ENCODE measurements at regions of chr13 and their contacts with region 1.

Region 1: GRCh38 chr13:99436686-99437416 is 64.4 kb upstream of the TM9SF2 start:
- DNase-seq: peak; percentile 95
- H3K4me3 Mint-ChIP-seq: peak overlapping the region; percentile 25
- H3K27ac Mint-ChIP-seq: peak overlapping the region; percentile 4
- H3K4me1 Mint-ChIP-seq: peaks cover 72% of the 10 kb centered on the region
- H3K27me3 Mint-ChIP-seq: peaks cover 23% of the 10 kb centered on the region

Region 2: DNA sequence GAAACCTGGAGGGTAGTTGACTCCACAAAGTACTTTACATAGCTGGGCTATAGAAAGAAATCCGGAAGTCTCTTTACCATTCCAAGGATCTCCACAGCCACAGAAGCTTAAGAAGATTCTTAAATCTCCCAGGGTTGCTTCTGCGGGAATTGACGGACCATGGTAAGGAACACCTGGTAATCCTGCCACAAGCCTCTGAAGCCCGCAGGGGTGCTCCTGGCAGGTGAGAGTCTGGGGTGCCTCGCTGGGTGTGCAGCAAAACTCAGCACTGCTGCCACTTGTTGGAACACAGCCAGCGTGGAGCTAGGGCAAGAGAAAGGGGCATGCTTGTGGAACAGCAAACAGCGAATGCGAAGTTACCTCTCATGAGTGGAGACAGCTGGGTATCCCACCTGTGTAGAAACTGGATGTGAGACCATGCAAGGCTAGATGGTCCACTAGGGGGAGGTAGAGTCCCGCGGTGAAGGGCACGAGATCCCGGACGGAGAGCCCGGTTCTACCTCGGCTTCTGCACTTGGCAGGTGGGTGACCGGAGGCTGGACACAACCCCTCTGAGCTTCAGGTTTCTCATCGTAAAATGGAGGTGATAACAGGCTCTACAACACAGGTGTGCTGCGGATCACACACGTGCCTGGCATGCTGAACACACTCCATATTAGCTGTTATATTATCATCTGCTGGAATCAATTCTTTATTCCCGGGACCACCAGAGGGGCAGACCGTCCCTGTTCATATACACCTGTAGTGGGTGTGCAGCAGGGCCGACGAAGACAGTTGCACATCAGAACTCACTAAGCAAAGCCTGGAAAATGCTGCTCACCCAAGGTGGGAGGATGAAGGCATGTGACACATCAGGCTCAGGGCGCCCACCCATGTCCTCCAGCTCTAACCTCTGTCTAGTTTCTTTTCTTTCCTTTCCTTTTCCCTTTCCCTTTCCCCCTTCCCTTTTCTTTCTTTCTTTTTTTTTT is 260.3 kb before region 1 on chr13:
- CTCF ChIA-PET with region 1: interaction called, 23 read pairs
- DNase-seq: peak; percentile 85
- H3K4me3 Mint-ChIP-seq: no peak overlapping the region
- H3K27ac Mint-ChIP-seq: peak overlapping the region; percentile 77
- H3K4me1 Mint-ChIP-seq: peaks cover 42% of the 10 kb centered on the region
- H3K27me3 Mint-ChIP-seq: peaks cover 28% of the 10 kb centered on the region

Region 3: GRCh38 chr13:99296398-99296797 is 140.5 kb before region 1 on chr13:
- CTCF ChIA-PET with region 1: interaction called, 15 read pairs
- DNase-seq: no peak
- H3K4me3 Mint-ChIP-seq: peak overlapping the region; percentile 58
- H3K27ac Mint-ChIP-seq: peak overlapping the region; percentile 90
- H3K4me1 Mint-ChIP-seq: peaks cover 75% of the 10 kb centered on the region
- H3K27me3 Mint-ChIP-seq: no peaks in the 10 kb centered on the region

Region 4: DNA sequence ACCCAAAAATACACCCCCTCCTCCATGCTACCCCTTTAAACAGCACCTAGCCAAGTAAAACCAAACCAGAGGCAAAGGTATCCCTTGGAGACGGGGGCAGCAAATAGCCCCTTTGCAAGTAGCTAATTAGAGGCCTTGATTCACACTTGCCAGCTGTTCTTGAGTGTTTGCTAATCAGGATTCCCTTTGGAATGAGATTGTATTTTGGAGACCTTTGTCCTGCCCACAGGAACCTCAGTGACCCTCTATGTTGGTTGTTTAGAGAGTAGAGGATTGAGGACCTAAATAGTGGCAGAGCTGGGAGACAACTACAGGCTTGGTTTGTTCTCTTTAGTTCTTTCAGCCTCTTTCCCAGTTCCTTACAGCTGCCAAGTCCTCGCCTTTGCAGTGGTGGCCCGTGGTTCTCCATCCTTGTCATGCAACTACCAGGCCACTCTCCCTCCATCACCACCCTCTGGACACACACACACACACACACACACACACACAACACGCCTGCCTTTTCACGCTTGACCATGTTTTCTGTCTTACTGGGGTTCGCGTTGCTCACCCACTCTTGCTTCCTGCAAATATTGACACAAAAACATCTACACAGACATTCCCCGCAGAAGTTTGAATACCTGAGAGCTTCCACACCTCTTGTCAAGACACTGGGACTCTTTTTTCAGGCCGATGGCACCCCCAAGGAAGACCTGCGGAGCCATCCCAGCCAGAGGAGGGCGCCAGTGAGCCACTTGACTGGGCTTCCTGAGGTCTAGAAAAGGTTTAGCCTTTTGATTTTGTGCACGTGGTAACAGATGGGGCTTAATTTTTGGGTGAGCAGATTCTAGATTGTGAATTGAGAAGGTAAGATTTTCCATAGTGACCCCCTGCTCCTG is 49.7 kb before region 1 on chr13:
- CTCF ChIA-PET with region 1: interaction called, 328 read pairs
- DNase-seq: peak; percentile 90
- H3K4me3 Mint-ChIP-seq: no peak overlapping the region
- H3K27ac Mint-ChIP-seq: peak overlapping the region; percentile 21
- H3K4me1 Mint-ChIP-seq: peaks cover 66% of the 10 kb centered on the region
- H3K27me3 Mint-ChIP-seq: no peaks in the 10 kb centered on the region

Region 5: DNA sequence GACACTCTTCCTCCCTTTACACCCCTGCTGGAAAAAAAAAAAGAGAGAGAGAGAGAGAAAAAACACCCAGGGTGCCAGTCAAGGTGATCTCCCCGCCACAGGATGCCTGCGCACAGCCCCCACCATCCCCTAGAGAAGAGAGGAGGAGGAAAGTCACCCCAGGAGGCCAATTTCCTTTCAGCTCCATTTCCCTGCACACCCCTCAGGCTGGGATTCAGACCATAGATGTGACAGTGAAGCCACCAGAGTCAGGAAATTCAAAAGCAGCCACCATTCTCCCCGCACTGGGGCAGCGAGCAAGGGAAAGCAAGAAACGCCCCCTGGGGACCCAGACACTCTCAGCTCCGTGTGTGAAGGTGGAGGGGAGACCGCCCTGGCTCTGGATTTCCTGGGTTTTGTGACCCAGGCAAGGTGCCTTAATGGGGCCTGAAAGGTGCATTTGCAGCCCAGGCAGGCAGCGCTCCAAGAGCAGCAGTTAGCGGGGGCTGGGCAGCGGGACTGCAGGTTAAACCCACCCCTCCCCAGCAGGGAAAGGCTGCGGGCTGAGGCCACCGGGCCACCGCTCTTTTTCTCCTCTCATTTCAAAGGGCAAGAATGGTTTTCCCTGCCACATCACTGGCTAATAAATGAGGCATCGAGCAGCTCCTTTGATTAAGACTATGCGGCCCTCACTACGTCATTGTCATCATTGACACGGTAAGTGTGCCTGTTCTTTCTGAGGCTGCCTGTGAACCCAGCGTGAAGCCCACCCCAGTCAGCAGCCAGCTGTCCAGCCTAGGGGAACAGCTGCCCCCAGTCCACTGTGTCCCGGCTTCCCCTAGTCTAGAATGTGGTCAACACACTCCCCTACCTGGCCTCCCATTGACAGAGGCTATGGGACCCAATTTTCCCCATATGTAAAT is 19.4 kb before region 1 on chr13:
- CTCF ChIA-PET with region 1: interaction called, 28 read pairs
- DNase-seq: peak; percentile 43
- H3K4me3 Mint-ChIP-seq: peak overlapping the region; percentile 14
- H3K27ac Mint-ChIP-seq: peak overlapping the region; percentile 78
- H3K4me1 Mint-ChIP-seq: peaks cover 38% of the 10 kb centered on the region
- H3K27me3 Mint-ChIP-seq: peaks cover 31% of the 10 kb centered on the region

Region 6: DNA sequence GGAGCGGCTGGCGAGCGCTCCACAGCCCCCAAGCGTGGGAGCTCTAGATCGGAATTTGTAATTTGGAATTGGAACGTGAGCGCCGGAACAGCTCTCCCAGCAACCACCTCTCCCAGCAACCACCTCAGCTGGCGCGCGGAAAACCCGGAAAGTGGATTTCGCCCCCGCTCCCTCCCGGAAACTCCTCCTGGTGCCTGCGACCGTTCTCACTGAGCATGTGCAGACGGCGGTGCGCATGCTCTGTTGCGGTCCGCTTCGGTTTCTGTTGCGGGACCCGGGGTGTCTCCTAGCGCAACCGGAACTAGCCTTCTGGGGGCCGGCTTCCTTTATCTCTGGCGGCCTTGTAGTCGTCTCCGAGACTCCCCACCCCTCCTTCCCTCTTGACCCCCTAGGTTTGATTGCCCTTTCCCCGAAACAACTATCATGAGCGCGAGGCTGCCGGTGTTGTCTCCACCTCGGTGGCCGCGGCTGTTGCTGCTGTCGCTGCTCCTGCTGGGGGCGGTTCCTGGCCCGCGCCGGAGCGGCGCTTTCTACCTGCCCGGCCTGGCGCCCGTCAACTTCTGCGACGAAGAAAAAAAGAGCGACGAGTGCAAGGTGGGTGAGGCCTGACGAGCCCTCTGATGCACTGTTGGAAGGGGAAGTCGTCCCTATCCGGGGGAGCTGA is 64.5 kb after region 1 on chr13 and contains the start of gene TM9SF2:
- CTCF ChIA-PET with region 1: interaction called, 39 read pairs
- DNase-seq: peak; percentile 98
- H3K4me3 Mint-ChIP-seq: peak within 1 kb of the TSS; percentile 93
- H3K27ac Mint-ChIP-seq: peak within 1 kb of the TSS; percentile 97
- H3K4me1 Mint-ChIP-seq: peaks cover 86% of the 10 kb centered on the region
- H3K27me3 Mint-ChIP-seq: peaks cover 5% of the 10 kb centered on the region

Region 7: DNA sequence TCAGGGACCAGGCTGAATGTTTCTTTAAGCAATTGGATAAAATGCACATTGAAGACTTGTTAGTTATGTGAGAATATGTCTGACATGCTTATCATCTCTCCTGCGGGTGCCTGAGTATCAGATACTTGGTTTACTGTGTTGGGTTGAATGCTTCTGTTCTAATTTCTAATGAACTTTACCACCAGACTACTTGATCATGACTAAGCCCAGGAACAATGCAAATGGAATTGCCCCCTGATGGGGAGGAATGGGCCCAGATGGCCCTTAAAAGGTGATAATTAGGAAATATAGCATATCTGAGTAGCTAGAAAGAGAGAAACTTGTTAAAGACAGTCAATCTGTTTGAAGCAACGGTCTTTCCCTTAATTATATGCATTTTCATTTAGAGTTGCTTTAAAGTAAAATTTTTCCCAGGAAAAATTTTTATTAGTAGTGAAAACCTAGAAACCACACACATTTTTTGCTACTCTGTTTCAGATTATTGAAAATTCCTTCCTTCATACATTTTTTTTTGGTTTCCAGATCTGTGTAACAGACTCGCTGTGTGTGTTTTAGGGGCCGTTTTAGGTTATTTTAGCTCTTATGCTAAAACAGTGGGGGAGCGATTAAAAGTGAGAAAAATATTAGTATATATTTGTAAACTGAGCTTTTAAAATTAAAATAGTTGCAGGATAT is 251.0 kb after region 1 on chr13:
- CTCF ChIA-PET with region 1: no interaction called
- DNase-seq: no peak
- H3K4me3 Mint-ChIP-seq: no peak overlapping the region
- H3K27ac Mint-ChIP-seq: no peak overlapping the region
- H3K4me1 Mint-ChIP-seq: no peaks in the 10 kb centered on the region
- H3K27me3 Mint-ChIP-seq: no peaks in the 10 kb centered on the region

Measured in activated naive CD4-positive, alpha-beta T cell treated with anti-CD3 and anti-CD28 coated beads, Interleukin-2, amount 10 ng/mL, durations not matched to agents 7 days and 5 days (primary cell).